Mammary epithelial cell (primary cell): ENCODE measurements at regions of chr4 and their contacts with region 1.

Region 1: GRCh38 chr4:10157478-10158332 is 41.1 kb upstream of the WDR1 start:
- DNase-seq: peak; percentile 71
- H3K4me3 ChIP-seq: no peak overlapping the region
- H3K27ac ChIP-seq: no peak overlapping the region
- H3K4me1 ChIP-seq: peaks cover 14% of the 10 kb centered on the region
- H3K27me3 ChIP-seq: no peaks in the 10 kb centered on the region
- CTCF ChIP-seq: peak; percentile 85 to 91

Region 2: DNA sequence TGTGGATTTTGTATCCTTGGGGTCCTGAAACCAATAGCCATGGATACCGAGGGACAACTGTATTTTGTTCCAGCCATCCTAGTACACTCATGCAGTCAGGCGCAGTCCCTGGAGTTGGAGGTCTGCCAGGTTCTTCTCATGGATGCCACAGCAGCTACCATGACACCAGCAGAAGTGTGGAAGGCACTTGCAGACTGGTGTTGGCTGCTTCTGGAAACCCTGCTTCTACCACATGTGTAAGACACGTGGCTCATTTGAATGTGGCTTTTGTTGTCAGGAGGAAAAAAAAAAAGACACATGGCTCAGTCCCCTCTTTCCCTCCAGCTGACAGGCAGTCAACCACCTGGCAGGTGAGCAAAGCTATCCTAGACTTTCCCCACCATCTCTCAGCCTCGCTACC is 356.9 kb before region 1 on chr4:
- CTCF ChIA-PET with region 1: interaction called, 10 read pairs
- dilution Hi-C with region 1: no loop called
- in situ Hi-C with region 1: no loop called
- intact Hi-C with region 1: no loop called
- DNase-seq: no peak
- H3K4me3 ChIP-seq: no peak overlapping the region
- H3K27ac ChIP-seq: no peak overlapping the region
- H3K4me1 ChIP-seq: peaks cover 4% of the 10 kb centered on the region
- H3K27me3 ChIP-seq: no peaks in the 10 kb centered on the region
- CTCF ChIP-seq: no peak

Region 3: DNA sequence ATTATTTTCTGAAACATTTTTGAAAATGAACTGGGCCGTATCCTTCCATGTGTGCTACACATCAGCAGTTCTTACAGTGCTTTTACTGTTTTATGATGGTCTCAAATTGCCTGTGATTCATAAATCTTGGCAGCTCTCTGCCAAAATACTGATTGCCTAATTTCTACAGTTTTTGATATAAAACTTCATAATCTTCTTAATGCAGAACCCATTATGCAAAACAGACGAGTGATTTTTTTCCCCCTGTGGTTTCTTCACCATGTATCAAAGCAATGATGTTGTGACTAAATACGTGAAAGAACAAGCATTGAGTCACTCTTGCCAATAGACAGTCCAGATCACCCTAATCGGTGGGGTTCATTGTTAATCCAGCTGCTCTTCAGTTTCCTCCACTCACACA is 115.3 kb after region 1 on chr4:
- CTCF ChIA-PET with region 1: no interaction called
- dilution Hi-C with region 1: no loop called
- in situ Hi-C with region 1: loop called in 1 of 2 experiments (anchors 25 kb)
- intact Hi-C with region 1: no loop called
- DNase-seq: peak; percentile 64
- H3K4me3 ChIP-seq: no peak overlapping the region
- H3K27ac ChIP-seq: no peak overlapping the region
- H3K4me1 ChIP-seq: no peaks in the 10 kb centered on the region
- H3K27me3 ChIP-seq: no peaks in the 10 kb centered on the region
- CTCF ChIP-seq: no peak

Region 4: DNA sequence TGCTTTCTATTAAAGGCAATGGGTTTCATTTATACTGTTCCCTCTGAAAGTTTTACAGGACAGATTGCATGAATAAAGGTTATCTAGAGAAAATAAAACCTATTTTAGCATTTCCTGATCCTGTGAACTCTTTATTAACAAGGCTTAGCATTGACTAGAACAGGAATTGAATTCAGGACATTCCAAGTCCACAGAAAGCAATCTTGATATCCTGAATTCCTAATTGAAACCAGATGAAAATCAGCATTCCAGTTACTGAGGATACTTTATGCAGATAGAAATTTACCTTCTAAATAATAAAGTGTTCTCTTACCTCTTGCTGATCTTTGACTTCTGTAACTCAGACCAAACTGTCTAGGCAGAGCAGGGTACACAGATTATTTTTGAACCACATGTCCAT is 148.1 kb after region 1 on chr4:
- CTCF ChIA-PET with region 1: no interaction called
- dilution Hi-C with region 1: no loop called
- in situ Hi-C with region 1: no loop called
- intact Hi-C with region 1: no loop called
- DNase-seq: no peak
- H3K4me3 ChIP-seq: no peak overlapping the region
- H3K27ac ChIP-seq: no peak overlapping the region
- H3K4me1 ChIP-seq: peaks cover 7% of the 10 kb centered on the region
- H3K27me3 ChIP-seq: no peaks in the 10 kb centered on the region
- CTCF ChIP-seq: no peak